ENCODE measurements at regions of chr10 and their contacts with region 1.

Region 1: GRCh38 chr10:102927311-102928010 is 9.4 kb downstream of the CNNM2 start:
- DNase-seq: no peak
- ATAC-seq: no peak
- H3K4me3 ChIP-seq: no peak overlapping the region
- H3K27ac ChIP-seq: no peak overlapping the region
- H3K4me1 ChIP-seq: peaks cover 0 to 4% of the 10 kb centered on the region in 2 donors
- H3K27me3 ChIP-seq: no peaks in the 10 kb centered on the region

Region 2: GRCh38 chr10:102965455-102965854 is 38.0 kb after region 1 on chr10:
- intact Hi-C with region 1: loop called (anchors 5 to 10 kb)
- DNase-seq: no peak
- ATAC-seq: no peak
- H3K4me3 ChIP-seq: no peak overlapping the region
- H3K27ac ChIP-seq: no peak overlapping the region
- H3K4me1 ChIP-seq: peaks cover 0 to 1% of the 10 kb centered on the region in 2 donors
- H3K27me3 ChIP-seq: no peaks in the 10 kb centered on the region

Region 3: DNA sequence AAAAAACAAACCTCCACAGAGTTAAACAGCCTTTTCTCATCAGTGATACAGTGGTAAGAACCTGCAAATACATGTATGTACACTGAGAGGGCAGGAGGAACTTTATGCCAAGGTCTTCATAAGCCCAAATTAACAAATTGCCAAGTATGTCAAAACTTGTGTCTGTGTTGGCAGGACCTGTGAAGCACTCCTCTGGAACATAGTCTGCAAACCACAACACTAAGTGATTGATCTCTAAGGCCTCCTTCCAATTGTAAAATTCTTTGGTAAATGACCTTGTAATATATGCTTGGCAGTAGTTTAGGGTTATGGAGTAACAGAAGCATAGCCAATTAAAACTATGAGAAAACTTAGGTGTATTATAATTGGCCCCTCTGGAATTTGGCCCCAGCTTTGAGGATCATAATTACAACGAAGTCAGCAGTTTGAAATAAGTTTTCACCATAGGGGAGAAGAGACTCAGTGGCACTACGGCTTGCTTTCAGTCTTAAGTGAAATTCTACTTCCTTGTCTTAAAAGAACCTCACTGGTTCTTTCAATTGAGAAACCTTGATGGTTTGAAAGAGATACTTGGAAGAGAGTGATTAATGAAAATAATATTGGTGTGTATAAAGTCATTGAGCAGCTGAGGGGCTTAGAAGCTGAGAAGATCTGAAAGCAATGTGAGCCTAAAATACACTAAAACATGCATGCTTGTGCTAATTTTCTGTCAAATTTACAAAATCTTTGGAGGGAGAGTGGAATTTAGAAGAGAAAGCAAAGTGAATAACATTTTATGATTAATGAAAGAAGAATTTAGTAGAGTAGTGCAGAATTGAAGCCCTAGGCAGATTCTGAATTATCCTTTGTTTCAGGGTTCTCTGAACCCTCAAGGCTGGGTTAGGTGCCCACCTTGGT is 48.3 kb after region 1 on chr10:
- intact Hi-C with region 1: loop called in 1 of 2 experiments (anchors 10 kb)
- DNase-seq: no peak
- ATAC-seq: no peak
- H3K4me3 ChIP-seq: no peak overlapping the region
- H3K27ac ChIP-seq: peak overlapping the region; percentile 43 to 44
- H3K4me1 ChIP-seq: peaks cover 0 to 3% of the 10 kb centered on the region in 2 donors
- H3K27me3 ChIP-seq: no peaks in the 10 kb centered on the region

Measured in aorta (tissue), 5 donors.